CD8-positive, alpha-beta T cell (primary cell): ENCODE measurements at regions of chr9 and their contacts with region 1.

Region 1: GRCh38 chr9:99076483-99077171 is 28.3 kb upstream of the TGFBR1 start:
- DNase-seq: peak in 8 of 9 experiments; percentile 46 to 85 (median 64)
- ATAC-seq: peak; percentile 98
- H3K4me3 ChIP-seq: no peak overlapping the region
- H3K4me3 Mint-ChIP-seq: peak overlapping the region; percentile 33
- H3K27ac ChIP-seq: peak overlapping the region in 1 of 2 experiments; percentile 47
- H3K27ac Mint-ChIP-seq: peak overlapping the region; percentile 84
- H3K4me1 ChIP-seq: peaks cover 23% of the 10 kb centered on the region
- H3K4me1 Mint-ChIP-seq: peaks cover 54% of the 10 kb centered on the region
- H3K27me3 ChIP-seq: no peaks in the 10 kb centered on the region
- H3K27me3 Mint-ChIP-seq: no peaks in the 10 kb centered on the region
- CTCF ChIP-seq: no peak

Region 2: DNA sequence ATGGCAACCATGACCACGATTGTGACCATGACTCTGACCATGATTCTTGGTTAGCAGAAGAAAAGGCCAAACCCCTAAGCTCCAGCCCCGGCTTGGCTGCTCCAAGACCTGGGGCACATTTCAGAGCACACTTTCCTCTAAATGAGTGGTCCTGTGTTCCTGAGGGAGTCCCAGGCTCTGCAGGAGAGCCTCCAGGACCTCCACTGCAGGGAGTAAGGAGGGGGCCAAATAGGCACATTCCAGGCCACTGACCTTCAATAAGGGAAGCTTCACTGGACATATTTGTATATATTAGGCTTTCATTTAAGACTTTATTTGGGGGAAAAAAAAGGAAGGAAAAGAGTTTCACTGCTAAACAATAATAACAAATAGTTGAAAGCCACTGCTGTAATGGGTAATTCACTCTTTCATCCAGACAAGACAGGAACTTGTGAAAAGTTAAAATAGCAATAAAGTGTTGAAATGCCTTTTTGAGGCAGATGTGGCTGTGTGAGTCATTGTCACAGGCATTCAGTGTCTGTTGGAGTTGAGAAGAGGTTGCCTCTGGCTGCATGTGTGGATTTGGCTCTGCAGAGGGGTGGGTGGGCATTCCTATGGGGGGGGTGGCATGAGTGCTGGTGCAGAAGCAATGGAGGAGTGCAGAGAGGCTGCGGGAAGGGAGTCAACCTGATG is 35.6 kb before region 1 on chr9:
- CTCF ChIA-PET with region 1: no interaction called
- POLR2A ChIA-PET with region 1: no interaction called
- intact Hi-C with region 1: loop called in 1 of 2 experiments (anchors 5 kb)
- DNase-seq: peak in 2 of 9 experiments; percentile 18 to 27
- ATAC-seq: no peak
- H3K4me3 ChIP-seq: no peak overlapping the region
- H3K4me3 Mint-ChIP-seq: no peak overlapping the region
- H3K27ac ChIP-seq: peak overlapping the region in 1 of 2 experiments; percentile 20
- H3K27ac Mint-ChIP-seq: no peak overlapping the region
- H3K4me1 ChIP-seq: peaks cover 5% of the 10 kb centered on the region
- H3K4me1 Mint-ChIP-seq: peaks cover 18% of the 10 kb centered on the region
- H3K27me3 ChIP-seq: no peaks in the 10 kb centered on the region
- H3K27me3 Mint-ChIP-seq: peaks cover 2% of the 10 kb centered on the region
- CTCF ChIP-seq: no peak